H1 (cell line): ENCODE measurements at regions of chr15 and their contacts with region 1.

Region 1: GRCh38 chr15:52759969-52760368 is 30.2 kb downstream of the ONECUT1 start:
- DNase-seq: no peak
- H3K4me3 ChIP-seq: no peak overlapping the region
- H3K27ac ChIP-seq: no peak overlapping the region
- H3K4me1 ChIP-seq: no peaks in the 10 kb centered on the region
- H3K27me3 ChIP-seq: no peaks in the 10 kb centered on the region
- CTCF ChIP-seq: peak; percentile 13 to 39 (median 37); a peak in 3 of 4 replicates
- EP300 ChIP-seq: no peak
- POLR2A ChIP-seq: no peak
- RAD21 ChIP-seq: peak; percentile 20 to 26; a peak in 2 of 4 replicates

Region 2: DNA sequence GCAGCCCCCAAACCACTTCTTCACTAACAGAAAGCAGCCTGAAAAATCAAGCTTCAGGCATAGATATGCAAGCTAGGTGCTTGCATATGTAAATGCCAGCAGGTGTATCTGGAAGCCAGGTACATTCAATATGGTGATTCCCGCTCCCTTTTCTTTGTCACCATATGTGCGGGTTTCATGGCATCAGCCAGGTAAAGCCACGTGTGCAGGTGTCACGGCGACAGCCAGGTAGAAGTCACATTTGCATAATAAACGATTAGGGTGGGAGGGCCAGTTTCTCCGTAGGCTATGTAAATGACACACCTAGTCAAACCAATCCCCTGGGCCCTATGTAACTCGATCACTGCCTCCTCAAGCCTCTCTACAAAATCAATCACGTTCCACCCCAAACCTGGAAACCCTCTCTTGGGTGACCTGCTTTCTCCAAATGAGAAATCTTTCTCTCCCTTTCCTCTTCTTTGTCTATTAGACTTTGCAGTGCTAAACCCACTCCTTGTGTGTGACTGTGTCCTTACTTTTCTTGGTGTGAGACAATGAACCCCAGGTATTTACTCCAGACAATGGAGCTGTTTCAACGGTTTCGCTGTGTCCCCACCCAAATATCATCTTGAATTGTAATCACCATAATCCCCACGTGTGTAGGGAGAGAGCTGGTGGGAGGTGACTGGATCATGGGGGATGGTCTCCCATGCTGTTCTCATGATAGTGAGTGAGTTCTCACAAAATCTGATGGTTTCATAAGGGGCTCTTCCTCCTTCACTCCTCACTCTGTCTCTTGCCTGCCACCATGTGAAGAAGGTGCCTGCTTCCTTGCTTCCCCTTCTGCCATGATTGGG is 14.4 kb before region 1 on chr15:
- CTCF ChIA-PET with region 1: interaction called, 5 read pairs
- POLR2A ChIA-PET with region 1: interaction called, 20 read pairs
- DNase-seq: peak; percentile 67 to 79
- H3K4me3 ChIP-seq: peak overlapping the region in 2 of 4 experiments; percentile 10 to 50; a peak in 4 of 8 replicates
- H3K27ac ChIP-seq: peak overlapping the region; percentile 92
- H3K4me1 ChIP-seq: peaks cover 8 to 27% (median 20%) of the 10 kb centered on the region in 4 experiments; a peak in 5 of 7 replicates
- H3K27me3 ChIP-seq: no peaks in the 10 kb centered on the region
- CTCF ChIP-seq: no peak
- EP300 ChIP-seq: no peak
- POLR2A ChIP-seq: peak; percentile 65 to 67
- RAD21 ChIP-seq: no peak

Region 3: DNA sequence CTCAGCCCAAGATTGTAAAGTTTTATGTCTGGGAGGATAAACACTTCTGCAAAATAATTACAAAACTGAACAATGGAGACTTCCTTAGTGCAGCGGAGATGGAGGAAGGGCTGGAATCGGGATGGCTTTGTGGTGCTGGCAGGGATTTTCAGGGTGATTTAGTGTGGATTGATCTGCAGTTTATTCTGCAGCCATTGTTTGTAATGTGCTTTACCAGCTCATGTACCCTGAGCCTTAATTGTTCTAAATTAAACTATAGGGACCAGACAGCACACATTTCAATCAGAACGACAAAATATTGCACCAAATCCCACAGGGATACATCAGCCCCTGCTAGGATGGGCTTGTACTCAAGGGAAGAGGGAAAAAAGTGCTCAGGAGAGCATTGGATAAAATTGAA is 133.4 kb after region 1 on chr15:
- CTCF ChIA-PET with region 1: no interaction called
- POLR2A ChIA-PET with region 1: no interaction called
- DNase-seq: no peak
- H3K4me3 ChIP-seq: no peak overlapping the region
- H3K27ac ChIP-seq: no peak overlapping the region
- H3K4me1 ChIP-seq: no peaks in the 10 kb centered on the region
- H3K27me3 ChIP-seq: no peaks in the 10 kb centered on the region
- CTCF ChIP-seq: no peak
- EP300 ChIP-seq: no peak
- POLR2A ChIP-seq: no peak
- RAD21 ChIP-seq: no peak